GM12878 (cell line): ENCODE measurements at regions of chr6 and their contacts with region 1.

Region 1: DNA sequence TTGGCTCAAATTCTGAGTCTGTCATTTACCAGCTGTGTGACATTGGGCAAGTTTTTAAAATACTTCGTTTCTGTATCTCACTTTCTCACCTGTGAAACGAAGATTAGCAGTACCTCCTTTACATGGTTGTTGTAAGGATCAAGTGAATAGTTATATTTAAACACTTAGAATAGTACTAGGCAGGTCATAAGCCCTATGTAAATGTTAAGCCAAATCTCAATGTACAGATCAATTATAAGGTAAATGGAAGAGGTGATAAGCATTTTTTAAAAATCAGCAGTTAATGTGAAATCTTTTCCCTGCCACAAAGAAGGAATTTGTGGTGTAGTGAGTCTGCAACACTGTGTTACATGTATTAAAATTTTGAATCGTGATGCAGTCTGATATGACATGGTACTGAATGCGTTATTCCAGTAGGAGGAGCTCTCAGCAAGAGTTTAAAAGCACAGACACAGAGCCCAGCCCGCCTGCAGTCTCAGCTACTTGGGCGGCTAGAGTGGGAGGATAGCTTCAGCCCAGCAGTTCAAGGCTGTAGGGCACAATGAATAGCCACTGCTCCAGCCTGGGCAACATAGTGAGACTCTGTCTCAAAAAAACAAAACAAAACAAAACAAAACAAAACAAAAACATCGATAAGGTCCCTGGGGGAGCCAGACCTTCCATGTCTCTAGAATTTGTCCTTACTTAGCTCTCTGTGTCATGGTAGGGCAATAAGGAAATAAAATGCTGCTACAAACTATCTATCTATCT is 46.0 kb downstream of the GTF2H5 start:
- DNase-seq: peak; percentile 23
- ATAC-seq: peak; percentile 100
- H3K4me3 ChIP-seq: no peak overlapping the region
- H3K27ac ChIP-seq: no peak overlapping the region
- H3K4me1 ChIP-seq: no peaks in the 10 kb centered on the region
- H3K27me3 ChIP-seq: no peaks in the 10 kb centered on the region
- CTCF ChIP-seq: peak; percentile 78 to 91 (median 81); a peak in 5 of 6 replicates
- EP300 ChIP-seq: no peak
- POLR2A ChIP-seq: no peak
- RAD21 ChIP-seq: peak; percentile 88

Region 2: GRCh38 chr6:158198461-158198860 is 15.6 kb before region 1 on chr6:
- CTCF ChIA-PET with region 1: interaction called, 15 read pairs
- POLR2A ChIA-PET with region 1: no interaction called
- RAD21 ChIA-PET with region 1: interaction called, 5 read pairs
- SMC1A ChIA-PET with region 1: interaction called, 4 read pairs
- in situ Hi-C with region 1: no loop called
- intact Hi-C with region 1: no loop called
- DNase-seq: no peak
- ATAC-seq: no peak
- H3K4me3 ChIP-seq: no peak overlapping the region
- H3K27ac ChIP-seq: no peak overlapping the region
- H3K4me1 ChIP-seq: no peaks in the 10 kb centered on the region
- H3K27me3 ChIP-seq: no peaks in the 10 kb centered on the region
- CTCF ChIP-seq: no peak
- EP300 ChIP-seq: no peak
- POLR2A ChIP-seq: no peak
- RAD21 ChIP-seq: no peak

Region 3: DNA sequence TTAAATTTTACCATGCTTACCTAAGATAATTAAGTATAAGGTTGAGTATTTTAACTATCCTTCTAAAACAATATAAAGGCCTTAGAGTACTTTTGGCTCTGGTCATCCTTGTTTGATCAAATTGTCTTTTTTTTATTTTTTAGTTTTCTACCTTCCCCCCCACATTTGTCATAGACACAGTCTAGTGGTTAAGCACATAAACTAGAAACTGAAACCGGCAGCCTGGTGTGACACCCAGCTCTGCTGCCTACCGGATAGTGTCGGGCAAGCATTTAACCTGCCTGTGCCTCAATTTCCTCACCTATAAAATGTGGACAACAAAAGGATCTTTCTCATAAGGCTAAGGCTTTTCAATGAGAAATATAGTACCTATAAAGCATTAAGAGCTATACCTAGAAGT is 76.6 kb after region 1 on chr6:
- CTCF ChIA-PET with region 1: no interaction called
- POLR2A ChIA-PET with region 1: no interaction called
- RAD21 ChIA-PET with region 1: no interaction called
- SMC1A ChIA-PET with region 1: no interaction called
- in situ Hi-C with region 1: no loop called
- intact Hi-C with region 1: no loop called
- DNase-seq: peak; percentile 39
- ATAC-seq: peak; percentile 96
- H3K4me3 ChIP-seq: peak overlapping the region; percentile 55
- H3K27ac ChIP-seq: peak overlapping the region; percentile 57
- H3K4me1 ChIP-seq: peaks cover 30% of the 10 kb centered on the region
- H3K27me3 ChIP-seq: no peaks in the 10 kb centered on the region
- CTCF ChIP-seq: no peak
- EP300 ChIP-seq: no peak
- POLR2A ChIP-seq: no peak
- RAD21 ChIP-seq: no peak

Region 4: GRCh38 chr6:158595223-158595622 is 381.1 kb after region 1 on chr6:
- CTCF ChIA-PET with region 1: interaction called, 68 read pairs
- POLR2A ChIA-PET with region 1: no interaction called
- RAD21 ChIA-PET with region 1: interaction called, 7 read pairs
- SMC1A ChIA-PET with region 1: interaction called, 9 read pairs
- in situ Hi-C with region 1: no loop called
- intact Hi-C with region 1: no loop called
- DNase-seq: no peak
- ATAC-seq: peak; percentile 58; the same call in 2 of the 3 replicates
- H3K4me3 ChIP-seq: no peak overlapping the region
- H3K27ac ChIP-seq: no peak overlapping the region
- H3K4me1 ChIP-seq: no peaks in the 10 kb centered on the region
- H3K27me3 ChIP-seq: no peaks in the 10 kb centered on the region
- CTCF ChIP-seq: peak; percentile 19 to 30 (median 25); a peak in 4 of 6 replicates
- EP300 ChIP-seq: no peak
- POLR2A ChIP-seq: no peak
- RAD21 ChIP-seq: peak; percentile 16; the same call in 1 of the 2 replicates

Region 5: DNA sequence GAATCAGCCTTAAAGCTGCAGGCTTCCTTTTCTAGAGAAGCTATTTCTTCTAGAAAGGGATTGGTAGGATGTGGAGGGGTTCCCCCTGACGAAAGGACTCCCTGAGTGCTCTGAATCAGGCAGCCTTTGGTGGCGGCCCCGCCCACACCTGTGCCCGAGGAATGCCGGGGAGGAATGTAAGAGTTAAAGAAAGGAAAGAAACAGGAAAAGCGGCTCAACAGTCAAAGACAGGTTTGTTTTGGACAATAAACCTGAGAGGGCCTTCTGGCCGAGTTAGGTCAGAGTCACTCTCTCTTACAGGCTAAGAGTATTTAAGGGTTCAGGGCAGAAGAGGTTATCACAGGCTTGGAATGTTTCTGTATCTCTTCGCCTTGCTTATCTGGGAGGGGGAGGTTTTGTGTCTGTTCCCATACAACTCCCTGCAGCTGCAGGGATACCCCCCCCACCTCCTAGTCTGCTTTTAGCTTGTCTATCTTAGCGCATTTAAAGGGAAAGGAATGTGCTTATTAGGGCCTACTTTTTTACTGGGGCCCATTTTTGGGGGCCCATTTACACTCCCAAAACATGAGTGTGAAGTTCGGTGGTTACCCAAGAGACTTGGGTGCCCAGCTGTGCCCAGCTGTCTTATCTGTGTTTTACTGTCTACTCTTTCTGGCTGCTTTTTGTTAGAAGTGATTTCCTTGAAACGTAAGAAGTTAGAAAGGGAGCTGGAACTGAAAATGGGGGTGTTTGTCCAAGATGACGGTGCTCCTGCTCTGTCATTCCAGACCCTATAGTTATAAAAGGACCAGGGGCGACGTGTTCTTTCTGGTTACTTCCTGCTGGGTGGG is 397.7 kb after region 1 on chr6:
- CTCF ChIA-PET with region 1: interaction called, 88 read pairs
- POLR2A ChIA-PET with region 1: no interaction called
- RAD21 ChIA-PET with region 1: interaction called, 4 read pairs
- SMC1A ChIA-PET with region 1: interaction called, 36 read pairs
- in situ Hi-C with region 1: no loop called
- intact Hi-C with region 1: no loop called
- DNase-seq: no peak
- ATAC-seq: no peak
- H3K4me3 ChIP-seq: no peak overlapping the region
- H3K27ac ChIP-seq: no peak overlapping the region
- H3K4me1 ChIP-seq: no peaks in the 10 kb centered on the region
- H3K27me3 ChIP-seq: no peaks in the 10 kb centered on the region
- CTCF ChIP-seq: no peak
- EP300 ChIP-seq: no peak
- POLR2A ChIP-seq: no peak
- RAD21 ChIP-seq: no peak

Region 6: DNA sequence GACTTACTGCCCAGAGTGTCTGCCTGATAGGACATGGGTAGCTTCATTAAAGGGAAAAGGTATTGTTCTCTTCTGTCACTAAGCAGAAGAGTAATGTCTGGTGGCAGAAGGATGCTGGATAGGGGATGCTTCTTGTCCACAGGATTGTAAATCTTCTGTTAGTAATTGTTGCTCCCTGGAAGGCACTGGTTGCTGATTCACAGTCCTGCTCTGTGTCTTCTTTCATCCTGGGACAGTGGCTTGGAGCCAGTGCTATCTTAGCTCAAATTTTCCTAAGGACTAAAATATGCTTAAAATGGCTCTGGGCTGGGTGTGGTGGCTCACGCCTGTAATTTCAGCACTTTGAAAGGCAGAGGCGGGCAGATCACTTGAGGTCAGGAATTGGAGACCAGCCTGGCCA is 483.7 kb after region 1 on chr6:
- CTCF ChIA-PET with region 1: interaction called, 96 read pairs
- POLR2A ChIA-PET with region 1: interaction called, 3 read pairs
- RAD21 ChIA-PET with region 1: interaction called, 4 read pairs
- SMC1A ChIA-PET with region 1: interaction called, 55 read pairs
- in situ Hi-C with region 1: loop called (anchors 5 kb)
- intact Hi-C with region 1: no loop called
- DNase-seq: no peak
- ATAC-seq: no peak
- H3K4me3 ChIP-seq: no peak overlapping the region
- H3K27ac ChIP-seq: no peak overlapping the region
- H3K4me1 ChIP-seq: no peaks in the 10 kb centered on the region
- H3K27me3 ChIP-seq: no peaks in the 10 kb centered on the region
- CTCF ChIP-seq: no peak
- EP300 ChIP-seq: no peak
- POLR2A ChIP-seq: no peak
- RAD21 ChIP-seq: no peak